Breast epithelium (tissue), 4 donors: ENCODE measurements at regions of chr5 and their contacts with region 1.

Region 1: DNA sequence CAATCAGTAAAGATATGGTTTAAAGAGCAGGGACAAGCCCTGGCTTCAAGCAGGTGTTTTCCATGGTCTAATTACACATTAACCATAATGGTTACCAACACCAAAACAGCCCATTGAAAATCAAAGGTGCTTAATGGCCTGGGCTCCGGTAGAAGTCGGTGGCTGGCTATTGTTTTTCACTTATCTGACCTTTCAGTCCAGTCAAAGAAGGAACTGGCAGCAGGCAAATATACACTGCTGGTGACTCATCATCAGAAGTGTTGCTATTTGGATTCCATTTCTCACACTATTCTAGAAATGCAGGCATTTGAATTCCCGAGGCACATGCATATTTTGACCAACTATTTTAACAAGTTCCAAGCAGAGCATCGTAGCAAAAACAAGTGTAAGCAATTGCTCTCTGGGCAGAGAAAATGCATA is 26.3 kb upstream of the GABRP start:
- DNase-seq: no peak
- H3K4me3 ChIP-seq: no peak overlapping the region
- H3K27ac ChIP-seq: peak overlapping the region; percentile 65 to 84
- H3K4me1 ChIP-seq: peaks cover 0 to 11% of the 10 kb centered on the region in 2 donors
- H3K27me3 ChIP-seq: no peaks in the 10 kb centered on the region
- CTCF ChIP-seq: no peak
- POLR2A ChIP-seq: no peak

Region 2: DNA sequence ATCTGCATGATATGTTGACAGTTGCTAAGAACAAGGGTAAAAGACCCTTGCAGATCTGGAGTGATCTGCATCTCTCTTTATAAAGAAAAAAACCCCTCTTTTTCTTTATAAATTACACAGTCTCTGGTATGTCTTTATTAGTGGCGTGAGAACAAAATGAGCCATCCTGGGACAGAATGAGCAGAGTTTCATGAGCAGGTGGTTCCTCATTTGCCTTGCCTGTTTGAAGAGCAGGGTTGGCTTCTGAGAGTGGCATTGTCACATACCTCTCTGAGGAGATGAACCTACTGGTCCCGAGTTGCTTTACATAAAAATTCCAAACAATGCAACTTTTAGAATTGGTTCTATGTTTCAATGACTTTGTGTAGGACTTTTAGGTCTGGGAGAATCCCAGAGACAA is 871.2 kb before region 1 on chr5:
- intact Hi-C with region 1: loop called (anchors 5 kb)
- DNase-seq: no peak
- H3K4me3 ChIP-seq: no peak overlapping the region
- H3K27ac ChIP-seq: no peak overlapping the region
- H3K4me1 ChIP-seq: no peaks in the 10 kb centered on the region
- H3K27me3 ChIP-seq: no peaks in the 10 kb centered on the region
- CTCF ChIP-seq: no peak
- POLR2A ChIP-seq: no peak

Region 3: DNA sequence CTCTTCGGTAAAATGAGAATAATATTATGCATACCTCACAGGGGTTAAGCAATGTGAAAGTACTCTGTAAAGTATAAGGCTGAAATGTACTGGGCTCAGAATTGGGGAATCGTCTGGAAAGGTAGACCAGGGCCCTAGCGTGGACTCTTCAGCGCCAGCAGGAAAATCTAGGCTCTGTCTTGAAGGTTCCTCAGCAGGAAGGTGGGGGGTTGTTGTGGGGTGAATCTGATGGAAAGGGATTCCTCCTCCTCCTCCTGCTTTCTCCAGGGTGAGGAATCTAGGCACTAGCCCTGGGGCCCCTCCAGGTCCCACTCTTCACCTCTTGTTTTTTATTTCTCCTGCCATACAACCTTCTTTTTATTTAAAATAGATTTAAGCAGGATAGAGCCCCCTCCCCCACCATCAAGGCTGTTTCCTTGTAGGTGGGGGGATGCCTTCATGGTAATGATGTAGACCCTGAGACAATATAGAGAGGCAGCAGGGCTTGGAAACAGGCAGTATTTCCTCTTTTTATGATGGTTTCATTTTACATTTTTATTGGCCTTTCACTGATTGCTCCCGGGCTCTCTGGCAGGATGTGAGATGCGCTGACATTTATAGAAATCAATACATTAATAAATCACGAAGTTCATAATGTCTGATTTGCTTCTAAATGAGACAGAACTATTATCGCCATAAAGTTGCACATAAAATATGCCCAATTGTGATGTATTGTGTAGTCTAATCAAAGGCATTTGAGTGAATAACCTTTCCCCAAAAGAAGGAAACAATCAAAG is 52.6 kb before region 1 on chr5:
- intact Hi-C with region 1: no loop called
- DNase-seq: no peak
- H3K4me3 ChIP-seq: no peak overlapping the region
- H3K27ac ChIP-seq: no peak overlapping the region
- H3K4me1 ChIP-seq: no peaks in the 10 kb centered on the region
- H3K27me3 ChIP-seq: no peaks in the 10 kb centered on the region
- CTCF ChIP-seq: no peak
- POLR2A ChIP-seq: no peak

Region 4: GRCh38 chr5:171031977-171032376 is 274.8 kb after region 1 on chr5:
- intact Hi-C with region 1: no loop called
- DNase-seq: no peak
- H3K4me3 ChIP-seq: no peak overlapping the region
- H3K27ac ChIP-seq: no peak overlapping the region
- H3K4me1 ChIP-seq: no peaks in the 10 kb centered on the region
- H3K27me3 ChIP-seq: no peaks in the 10 kb centered on the region
- CTCF ChIP-seq: no peak
- POLR2A ChIP-seq: no peak

Region 5: GRCh38 chr5:172175263-172175719 is 1418.1 kb after region 1 on chr5:
- intact Hi-C with region 1: no loop called
- DNase-seq: no peak
- H3K4me3 ChIP-seq: peak overlapping the region; percentile 7 to 39 (median 20)
- H3K27ac ChIP-seq: peak overlapping the region in 1 of 2 donors; percentile 32
- H3K4me1 ChIP-seq: peaks cover 0 to 4% of the 10 kb centered on the region in 2 donors
- H3K27me3 ChIP-seq: no peaks in the 10 kb centered on the region
- CTCF ChIP-seq: no peak
- POLR2A ChIP-seq: no peak